ENCODE measurements at regions of chr9 and their contacts with region 1.

Region 1: GRCh38 chr9:136488247-136489214 is 5.7 kb upstream of the SEC16A start:
- DNase-seq: peak; percentile 62
- H3K4me3 Mint-ChIP-seq: no peak overlapping the region
- H3K27ac Mint-ChIP-seq: no peak overlapping the region
- H3K4me1 Mint-ChIP-seq: peaks cover 3% of the 10 kb centered on the region
- H3K27me3 Mint-ChIP-seq: no peaks in the 10 kb centered on the region

Region 2: GRCh38 chr9:136451221-136451877 is 37.2 kb before region 1 on chr9:
- intact Hi-C with region 1: no loop called
- DNase-seq: no peak
- H3K4me3 Mint-ChIP-seq: no peak overlapping the region
- H3K27ac Mint-ChIP-seq: no peak overlapping the region
- H3K4me1 Mint-ChIP-seq: no peaks in the 10 kb centered on the region
- H3K27me3 Mint-ChIP-seq: no peaks in the 10 kb centered on the region

Region 3: DNA sequence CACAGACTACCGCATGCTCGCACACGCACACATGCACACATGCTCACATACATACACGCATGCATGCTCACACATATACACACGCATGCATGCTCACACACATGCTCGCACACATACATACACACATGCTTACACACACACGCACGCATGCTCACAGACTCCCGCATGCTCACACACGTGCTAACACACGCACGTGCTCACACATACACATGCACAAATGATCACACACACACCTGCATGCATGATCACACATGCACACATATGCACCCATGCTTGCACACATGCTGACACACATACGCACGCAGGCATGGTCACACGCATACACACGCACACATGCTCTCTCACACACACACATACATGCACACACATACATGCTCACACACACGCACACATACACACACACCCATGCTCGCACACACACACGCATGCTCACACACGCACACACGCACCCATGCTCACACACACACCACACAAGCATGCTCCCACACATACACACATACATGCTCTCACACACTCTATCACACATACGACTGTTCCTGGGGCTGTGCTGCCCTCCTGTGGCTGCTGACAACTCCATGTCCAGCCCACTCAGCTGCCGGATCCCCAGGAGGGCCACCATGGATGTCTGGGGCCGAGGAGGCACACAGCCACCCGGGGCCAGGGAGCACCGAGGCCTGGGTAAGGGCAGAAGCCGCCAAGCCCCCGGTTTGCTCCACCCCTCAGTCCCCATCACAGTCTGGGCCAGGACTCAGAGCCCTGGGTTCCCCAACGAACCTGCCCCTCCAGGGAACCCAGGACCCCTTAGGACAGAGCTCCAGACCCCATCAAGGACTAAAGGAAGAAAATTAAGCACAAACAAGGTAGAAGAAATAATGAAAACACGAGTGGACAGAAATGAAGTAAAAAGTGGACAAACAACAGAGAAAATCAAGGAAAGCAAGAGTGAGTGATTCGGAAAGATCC is 142.8 kb after region 1 on chr9:
- intact Hi-C with region 1: loop called (anchors 1 kb)
- DNase-seq: peak; percentile 68
- H3K4me3 Mint-ChIP-seq: no peak overlapping the region
- H3K27ac Mint-ChIP-seq: no peak overlapping the region
- H3K4me1 Mint-ChIP-seq: no peaks in the 10 kb centered on the region
- H3K27me3 Mint-ChIP-seq: peaks cover 4% of the 10 kb centered on the region

Measured in activated T-helper 2 cell treated with anti-CD3 and anti-CD28 coated beads, Interferon-gamma antibody, Interleukin-2, Interleukin-4, amounts not matched to agents 10 μg/mL and 5 μg/mL and 100 μg/mL, durations not matched to agents 14 hours and 24 hours and 36 hours (primary cell).